ENCODE measurements at regions of chr3 and their contacts with region 1.

Region 1: GRCh38 chr3:149969940-149970715 is 567 bp downstream of the PFN2 start:
- DNase-seq: peak; percentile 74 to 97 (median 80)

Region 2: GRCh38 chr3:149752051-149752787 is 217.9 kb before region 1 on chr3 and contains the start of gene COMMD2:
- intact Hi-C with region 1: loop called (anchors 5 kb)
- DNase-seq: peak; percentile 61 to 95 (median 73)

Region 3: GRCh38 chr3:149765762-149766334 is 204.3 kb before region 1 on chr3:
- intact Hi-C with region 1: loop called (anchors 5 kb)
- DNase-seq: no peak

Region 4: DNA sequence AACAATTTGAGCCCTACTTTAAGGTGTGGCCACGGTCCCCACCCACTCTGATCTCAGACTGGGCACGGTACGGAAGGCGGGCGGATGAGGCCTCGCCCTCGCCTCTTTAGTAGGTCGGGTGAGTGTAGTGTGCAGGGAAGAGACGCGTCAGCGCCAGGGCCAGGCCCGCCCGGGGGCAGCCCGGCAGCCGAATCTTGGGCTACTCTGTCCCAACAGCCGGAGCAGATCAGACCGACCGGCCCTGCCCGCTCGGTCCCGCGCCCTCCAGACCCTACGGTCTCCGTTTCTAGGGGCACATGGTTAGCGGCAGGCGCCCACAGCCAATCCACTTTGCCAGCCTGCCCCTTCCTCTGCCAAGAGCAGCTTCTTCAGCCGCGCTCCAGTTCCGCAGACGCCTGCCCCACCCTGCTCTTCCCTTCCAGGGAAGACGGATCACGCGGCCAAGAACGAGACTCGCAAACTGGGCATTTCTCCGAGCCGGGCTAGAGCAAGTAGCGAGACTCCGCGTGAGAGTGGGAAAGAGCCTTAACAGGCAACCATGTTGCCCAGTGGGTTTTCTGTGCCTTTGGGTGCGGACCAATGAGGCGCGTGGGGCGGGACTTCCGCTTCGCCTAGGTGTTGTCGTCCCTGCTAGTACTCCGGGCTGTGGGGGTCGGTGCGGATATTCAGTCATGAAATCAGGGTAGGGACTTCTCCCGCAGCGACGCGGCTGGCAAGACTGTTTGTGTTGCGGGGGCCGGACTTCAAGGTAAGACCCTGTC is 157.3 kb before region 1 on chr3 and contains the start of gene RNF13:
- intact Hi-C with region 1: loop called (anchors 5 kb)
- DNase-seq: peak; percentile 97 to 100 (median 99)

Region 5: DNA sequence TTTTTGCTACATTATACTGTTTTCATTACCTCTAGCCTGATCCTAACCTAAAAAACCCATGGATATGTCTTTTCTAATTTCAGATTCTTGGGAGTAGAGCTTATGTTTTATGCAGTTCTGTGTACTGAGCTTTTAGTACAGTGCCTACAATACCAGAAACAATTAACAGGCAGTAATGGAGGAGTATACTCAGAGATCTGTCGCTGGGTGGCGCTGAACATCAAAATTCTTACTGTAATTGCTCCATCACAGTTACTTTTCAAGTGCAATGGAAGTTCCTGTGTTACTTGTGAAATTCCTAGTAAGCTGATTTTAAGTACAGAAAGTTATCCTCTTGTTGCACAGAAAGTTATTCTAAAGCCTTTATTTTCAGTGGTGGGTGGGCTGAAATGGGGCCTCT is 90.3 kb before region 1 on chr3:
- intact Hi-C with region 1: loop called (anchors 5 kb)
- DNase-seq: peak in 6 of 10 donors; percentile 62 to 89 (median 70)

Region 6: GRCh38 chr3:149917124-149917667 is 52.9 kb before region 1 on chr3:
- intact Hi-C with region 1: no loop called
- DNase-seq: no peak

Region 7: DNA sequence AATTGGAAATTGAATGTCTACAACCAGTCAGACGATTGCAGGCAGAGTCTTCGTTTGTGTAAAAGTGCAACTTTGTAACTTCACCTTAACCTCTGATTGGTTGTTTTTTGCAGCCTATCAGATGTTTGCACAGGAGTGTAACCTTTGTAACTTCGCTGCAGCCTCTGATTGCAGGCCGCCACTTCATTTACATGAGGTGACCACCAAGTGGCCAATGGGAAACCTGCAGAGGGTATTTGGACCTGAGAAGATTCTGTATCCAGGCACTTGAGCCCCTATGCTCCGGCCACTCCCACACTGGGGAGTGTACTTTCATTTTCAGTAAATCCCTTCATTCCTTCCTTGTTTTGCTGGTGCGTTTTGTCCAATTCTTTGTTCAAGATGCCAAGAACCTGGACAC is 68.7 kb after region 1 on chr3:
- intact Hi-C with region 1: no loop called
- DNase-seq: no peak

Region 8: GRCh38 chr3:150074697-150075416 is 104.7 kb after region 1 on chr3:
- intact Hi-C with region 1: no loop called
- DNase-seq: no peak

Region 9: DNA sequence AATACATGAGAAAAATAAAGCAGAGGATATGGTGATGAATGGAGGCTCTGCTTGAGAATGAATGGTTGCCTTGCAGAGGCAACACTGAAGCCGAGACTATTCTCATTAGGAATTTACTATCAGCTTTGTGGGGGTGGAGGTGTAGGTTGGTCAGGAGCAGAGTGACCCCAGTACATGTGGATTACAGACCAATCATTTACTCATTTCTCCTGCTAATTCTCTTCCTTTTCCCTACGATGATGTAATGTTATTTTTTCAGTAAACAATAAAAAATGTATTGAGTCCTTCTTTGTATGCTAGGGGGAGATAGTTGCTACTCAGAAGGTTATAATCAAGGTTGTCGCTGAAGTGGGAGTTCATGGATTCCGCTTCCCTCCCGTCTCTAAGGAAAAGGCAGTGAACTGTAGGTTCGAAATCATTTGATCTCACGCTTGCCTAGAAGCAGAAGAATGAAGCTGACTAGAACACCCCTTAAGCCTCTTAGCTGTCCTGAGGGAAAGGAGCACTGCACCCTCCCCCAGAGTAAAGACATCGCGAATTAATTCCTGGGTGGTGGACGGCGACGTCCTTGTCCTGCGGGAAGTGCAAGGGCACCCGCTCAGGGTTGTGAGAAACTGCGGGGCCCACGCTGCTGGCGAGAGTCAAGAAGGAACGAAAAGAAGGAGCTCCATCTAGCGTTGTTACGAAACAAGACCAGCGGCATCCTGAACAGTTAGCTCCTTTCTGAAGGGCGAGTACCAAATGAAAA is 213.7 kb after region 1 on chr3:
- intact Hi-C with region 1: loop called (anchors 1 kb)
- DNase-seq: peak; percentile 66 to 96 (median 78)

Region 10: GRCh38 chr3:150220799-150221198 is 250.7 kb after region 1 on chr3:
- intact Hi-C with region 1: loop called (anchors 2 kb)
- DNase-seq: no peak